IMR-90 (cell line): ENCODE measurements at regions of chr9 and their contacts with region 1.

Region 1: GRCh38 chr9:117265253-117265652 is 149.6 kb downstream of the ASTN2 start:
- DNase-seq: no peak
- ATAC-seq: no peak
- H3K4me3 ChIP-seq: no peak overlapping the region
- H3K27ac ChIP-seq: no peak overlapping the region
- H3K4me1 ChIP-seq: no peaks in the 10 kb centered on the region
- H3K27me3 ChIP-seq: no peaks in the 10 kb centered on the region
- CTCF ChIP-seq: no peak
- POLR2A ChIP-seq: no peak
- RAD21 ChIP-seq: no peak

Region 2: GRCh38 chr9:117073539-117074341 is 191.5 kb before region 1 on chr9:
- CTCF ChIA-PET with region 1: no interaction called
- POLR2A ChIA-PET with region 1: no interaction called
- dilution Hi-C with region 1: no loop called
- in situ Hi-C with region 1: no loop called
- intact Hi-C with region 1: no loop called
- DNase-seq: no peak
- ATAC-seq: no peak
- H3K4me3 ChIP-seq: no peak overlapping the region
- H3K27ac ChIP-seq: no peak overlapping the region
- H3K4me1 ChIP-seq: no peaks in the 10 kb centered on the region
- H3K27me3 ChIP-seq: no peaks in the 10 kb centered on the region
- CTCF ChIP-seq: peak; percentile 39
- POLR2A ChIP-seq: no peak
- RAD21 ChIP-seq: peak; percentile 52

Region 3: DNA sequence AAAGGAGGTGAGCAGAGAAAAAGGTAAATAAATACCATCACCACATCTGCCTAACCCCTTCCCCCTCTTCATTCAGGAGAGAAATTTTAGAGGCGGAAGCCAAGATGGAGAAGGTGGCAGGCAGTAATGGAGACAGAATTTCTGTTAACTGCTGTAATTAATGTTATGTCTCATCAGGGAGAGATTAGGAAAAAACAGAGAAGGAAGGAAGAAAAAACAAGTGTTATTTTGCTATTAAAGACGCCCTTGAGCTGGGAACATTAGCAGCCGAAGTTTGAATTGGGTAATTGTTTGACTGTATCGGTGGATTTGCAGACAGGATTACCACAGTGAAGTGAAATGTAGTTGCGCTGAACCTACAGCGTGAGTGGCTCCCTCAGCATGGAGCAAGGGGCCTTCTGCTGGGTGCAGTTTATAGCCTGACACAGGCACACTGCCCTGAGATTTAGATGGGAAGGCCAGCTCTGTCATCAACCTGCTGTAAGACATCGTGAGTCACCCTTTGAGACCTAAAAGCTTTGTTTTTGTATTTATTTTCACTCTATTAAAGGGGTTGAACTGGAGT is 13.3 kb after region 1 on chr9:
- CTCF ChIA-PET with region 1: interaction called, 10 read pairs
- POLR2A ChIA-PET with region 1: no interaction called
- dilution Hi-C with region 1: no loop called
- in situ Hi-C with region 1: no loop called
- intact Hi-C with region 1: no loop called
- DNase-seq: no peak
- ATAC-seq: no peak
- H3K4me3 ChIP-seq: no peak overlapping the region
- H3K27ac ChIP-seq: no peak overlapping the region
- H3K4me1 ChIP-seq: no peaks in the 10 kb centered on the region
- H3K27me3 ChIP-seq: no peaks in the 10 kb centered on the region
- CTCF ChIP-seq: no peak
- POLR2A ChIP-seq: no peak
- RAD21 ChIP-seq: no peak

Region 4: GRCh38 chr9:117334101-117334500 is 68.8 kb after region 1 on chr9:
- CTCF ChIA-PET with region 1: no interaction called
- POLR2A ChIA-PET with region 1: no interaction called
- dilution Hi-C with region 1: no loop called
- in situ Hi-C with region 1: no loop called
- intact Hi-C with region 1: loop called (anchors 10 kb)
- DNase-seq: no peak
- ATAC-seq: no peak
- H3K4me3 ChIP-seq: no peak overlapping the region
- H3K27ac ChIP-seq: no peak overlapping the region
- H3K4me1 ChIP-seq: no peaks in the 10 kb centered on the region
- H3K27me3 ChIP-seq: no peaks in the 10 kb centered on the region
- CTCF ChIP-seq: no peak
- POLR2A ChIP-seq: no peak
- RAD21 ChIP-seq: no peak